IMR-90 (cell line): ENCODE measurements at regions of chr11 and their contacts with region 1.

Region 1: GRCh38 chr11:119356349-119357031 is 10.0 kb upstream of the MFRP start:
- DNase-seq: peak; percentile 66
- ATAC-seq: peak; percentile 87
- H3K4me3 ChIP-seq: peak overlapping the region; percentile 46
- H3K27ac ChIP-seq: no peak overlapping the region
- H3K4me1 ChIP-seq: peaks cover 3% of the 10 kb centered on the region
- H3K27me3 ChIP-seq: 0 out of 2 replicates have a peak, but pooled peaks cover 4% of the 10 kb centered on the region
- CTCF ChIP-seq: peak; percentile 90
- POLR2A ChIP-seq: no peak
- RAD21 ChIP-seq: peak; percentile 79

Region 2: DNA sequence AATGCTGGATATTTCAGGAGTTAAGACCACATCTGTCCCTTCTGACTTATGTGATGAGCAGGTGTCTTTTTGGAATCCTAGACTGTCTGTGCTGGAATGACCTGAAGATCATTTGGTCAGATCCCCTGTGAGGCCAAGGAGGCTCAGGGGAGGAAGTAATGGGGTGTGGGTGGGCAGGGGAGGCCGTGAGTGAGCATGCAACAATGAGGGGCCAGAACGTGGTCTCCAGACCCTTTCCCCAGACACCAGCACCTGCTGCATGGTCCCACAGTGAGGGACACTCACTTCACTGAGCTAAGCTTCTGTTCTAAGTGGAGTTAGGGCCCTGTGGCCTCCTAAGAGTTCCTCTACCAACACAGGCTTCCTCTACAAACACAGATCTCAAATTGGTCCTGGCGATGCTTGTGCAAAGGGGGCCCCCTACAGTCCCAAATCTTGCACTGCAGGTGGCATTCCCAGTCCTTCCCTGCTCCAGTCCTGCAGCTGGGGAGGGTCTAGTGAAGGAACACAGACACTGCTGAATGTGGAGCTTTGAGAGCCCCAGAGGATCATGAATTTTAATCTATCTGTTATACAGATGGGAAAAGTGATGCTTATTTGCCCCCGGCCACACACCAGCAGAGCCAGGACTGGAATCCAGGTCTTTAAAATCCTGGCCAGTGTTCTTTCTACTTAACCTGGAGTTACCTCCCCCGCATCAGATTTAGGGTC is 17.6 kb after region 1 on chr11:
- CTCF ChIA-PET with region 1: interaction called, 32 read pairs
- POLR2A ChIA-PET with region 1: interaction called, 3 read pairs
- dilution Hi-C with region 1: no loop called
- in situ Hi-C with region 1: no loop called
- intact Hi-C with region 1: loop called (anchors 1 kb)
- DNase-seq: peak; percentile 75
- ATAC-seq: peak; percentile 81
- H3K4me3 ChIP-seq: no peak overlapping the region
- H3K27ac ChIP-seq: no peak overlapping the region
- H3K4me1 ChIP-seq: peaks cover 24% of the 10 kb centered on the region
- H3K27me3 ChIP-seq: no peaks in the 10 kb centered on the region
- CTCF ChIP-seq: peak; percentile 97
- POLR2A ChIP-seq: no peak
- RAD21 ChIP-seq: peak; percentile 93

Region 3: GRCh38 chr11:120108154-120108865 is 751.8 kb after region 1 on chr11:
- CTCF ChIA-PET with region 1: no interaction called
- POLR2A ChIA-PET with region 1: no interaction called
- dilution Hi-C with region 1: no loop called
- in situ Hi-C with region 1: loop called (anchors 25 kb)
- intact Hi-C with region 1: no loop called
- DNase-seq: peak; percentile 30
- ATAC-seq: peak; percentile 99
- H3K4me3 ChIP-seq: no peak overlapping the region
- H3K27ac ChIP-seq: no peak overlapping the region
- H3K4me1 ChIP-seq: no peaks in the 10 kb centered on the region
- H3K27me3 ChIP-seq: peaks cover 68% of the 10 kb centered on the region
- CTCF ChIP-seq: peak; percentile 98
- POLR2A ChIP-seq: no peak
- RAD21 ChIP-seq: peak; percentile 95